ENCODE measurements at regions of chr17 and their contacts with region 1.

Region 1: GRCh38 chr17:17041571-17042380 is 481 bp upstream of the MPRIP start:
- DNase-seq: peak; percentile 99 to 100 (median 99)
- H3K4me3 ChIP-seq: peak overlapping the region; percentile 49 to 86 (median 69)
- H3K27ac ChIP-seq: peak overlapping the region; percentile 49 to 94 (median 87)
- H3K27me3 ChIP-seq: no peaks in the 10 kb centered on the region
- CTCF ChIP-seq: peak in 12 of 56 donors; percentile 7 to 39 (median 18)

Region 2: DNA sequence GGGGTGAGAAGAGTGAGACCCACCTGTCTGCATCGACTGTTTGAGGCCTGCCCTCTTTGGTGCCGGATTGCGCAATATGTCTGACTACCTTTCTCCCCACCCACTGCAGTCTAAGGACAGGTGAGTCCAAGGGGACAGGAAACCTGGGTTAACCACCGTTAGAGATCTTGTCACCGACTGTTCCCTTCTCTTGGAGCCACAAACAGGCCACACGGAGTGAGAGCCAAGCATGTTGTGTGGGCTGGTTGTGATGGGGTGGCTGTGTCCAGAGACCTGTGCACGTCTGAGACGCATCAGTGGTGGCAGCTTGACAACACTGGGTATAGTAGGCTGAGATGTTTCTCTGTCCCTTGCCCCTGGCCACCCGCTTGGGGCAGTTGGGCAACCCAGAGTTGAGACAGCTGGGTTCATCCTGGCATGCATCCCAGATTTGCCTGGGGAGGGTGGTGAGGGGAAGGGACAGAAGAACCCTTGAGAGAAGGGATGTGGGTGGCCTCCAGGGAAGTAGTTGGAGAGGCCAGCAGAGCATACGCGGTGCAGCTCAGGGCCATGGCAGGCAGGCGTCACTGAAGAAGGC is 21.9 kb after region 1 on chr17:
- intact Hi-C with region 1: loop called in 1 of 2 experiments (anchors 2 kb)
- DNase-seq: peak; percentile 51 to 93 (median 91)
- H3K4me3 ChIP-seq: peak overlapping the region in 8 of 59 donors; percentile 2 to 29 (median 13)
- H3K27ac ChIP-seq: peak overlapping the region in 58 of 59 donors; percentile 7 to 92 (median 78)
- H3K27me3 ChIP-seq: no peaks in the 10 kb centered on the region
- CTCF ChIP-seq: peak in 30 of 56 donors; percentile 5 to 48 (median 20)

Region 3: DNA sequence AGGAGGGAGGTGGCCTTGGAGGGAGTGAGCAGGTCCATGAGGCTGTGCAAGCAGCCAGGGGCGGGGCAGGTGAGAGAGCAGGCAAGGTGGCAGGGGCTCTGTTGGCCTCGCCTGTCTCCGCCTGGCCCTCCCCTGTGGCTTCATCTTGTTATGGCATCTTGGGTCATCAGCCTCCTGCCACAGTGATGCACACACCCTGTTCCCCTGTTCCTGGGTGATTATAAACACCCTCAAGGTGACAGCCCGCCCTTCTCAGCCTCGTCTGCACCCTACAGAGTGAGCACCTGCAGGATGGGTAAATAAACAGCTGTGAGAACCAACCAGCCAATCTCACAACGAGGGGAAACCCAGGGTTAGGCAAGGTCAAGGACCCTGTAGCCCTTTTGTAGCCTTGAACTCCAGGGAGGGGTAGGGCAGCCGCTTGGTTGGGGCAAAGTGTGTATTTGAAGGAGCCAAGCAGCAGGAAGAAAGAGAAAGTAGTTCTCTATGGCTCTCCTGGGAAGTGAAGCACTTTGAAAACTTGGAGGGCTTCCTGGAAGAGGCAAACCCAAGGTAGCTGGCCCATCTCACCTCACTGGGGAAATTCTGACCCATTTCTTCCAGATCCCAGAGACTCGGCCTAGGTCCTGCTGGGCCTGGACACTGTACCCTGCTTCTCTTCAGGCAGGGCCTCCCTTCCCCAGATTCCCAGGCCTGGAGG is 322.0 kb after region 1 on chr17:
- intact Hi-C with region 1: no loop called
- DNase-seq: peak in 6 of 10 donors; percentile 8 to 37 (median 26)
- H3K4me3 ChIP-seq: no peak overlapping the region
- H3K27ac ChIP-seq: peak overlapping the region in 8 of 59 donors; percentile 23 to 64 (median 40)
- H3K27me3 ChIP-seq: peaks cover 0 to 18% (median 0%) of the 10 kb centered on the region in 45 donors
- CTCF ChIP-seq: no peak

Measured in dorsolateral prefrontal cortex (tissue), 120 donors.